Gastrocnemius medialis (tissue), 4 donors: ENCODE measurements at regions of chr11 and their contacts with region 1.

Region 1: DNA sequence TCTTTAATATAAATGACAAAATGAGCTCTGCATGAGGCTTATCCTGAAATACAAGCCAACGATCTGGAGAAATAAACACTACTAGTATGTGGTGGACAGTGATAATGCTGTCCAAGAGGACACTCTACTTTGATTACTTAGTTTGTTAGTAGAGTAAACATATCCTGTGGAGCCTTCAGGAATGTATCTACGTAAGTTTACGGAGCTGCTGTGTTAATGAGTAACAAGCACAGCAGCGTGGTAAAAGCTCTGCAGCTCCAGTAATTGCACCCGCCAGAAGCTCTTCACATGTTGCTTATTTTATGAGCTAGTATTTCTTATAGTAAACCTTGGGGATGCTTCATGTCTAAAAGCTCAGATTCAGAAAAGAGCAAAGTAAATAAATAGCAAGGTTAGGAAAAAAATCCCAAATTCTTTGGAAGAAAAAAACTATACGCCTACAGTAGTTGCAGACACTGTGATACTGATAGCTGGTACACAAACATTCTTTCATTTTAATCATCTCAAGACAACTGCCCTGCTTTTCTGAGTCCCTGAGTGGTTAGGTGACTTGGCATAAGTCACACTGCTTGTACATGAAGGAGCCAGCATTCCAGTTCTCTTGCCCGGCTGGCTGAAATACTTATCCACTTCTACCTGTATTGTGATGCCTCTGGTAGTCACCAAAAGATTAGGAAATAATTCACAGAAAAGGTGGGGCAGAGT is 32.7 kb upstream of the CCDC34 start:
- DNase-seq: no peak
- ATAC-seq: peak in 1 of 2 donors; percentile 65
- H3K4me3 ChIP-seq: no peak overlapping the region
- H3K27ac ChIP-seq: no peak overlapping the region
- H3K4me1 ChIP-seq: peaks cover 23 to 33% of the 10 kb centered on the region in 2 donors
- H3K27me3 ChIP-seq: no peaks in the 10 kb centered on the region
- CTCF ChIP-seq: no peak
- POLR2A ChIP-seq: no peak

Region 2: DNA sequence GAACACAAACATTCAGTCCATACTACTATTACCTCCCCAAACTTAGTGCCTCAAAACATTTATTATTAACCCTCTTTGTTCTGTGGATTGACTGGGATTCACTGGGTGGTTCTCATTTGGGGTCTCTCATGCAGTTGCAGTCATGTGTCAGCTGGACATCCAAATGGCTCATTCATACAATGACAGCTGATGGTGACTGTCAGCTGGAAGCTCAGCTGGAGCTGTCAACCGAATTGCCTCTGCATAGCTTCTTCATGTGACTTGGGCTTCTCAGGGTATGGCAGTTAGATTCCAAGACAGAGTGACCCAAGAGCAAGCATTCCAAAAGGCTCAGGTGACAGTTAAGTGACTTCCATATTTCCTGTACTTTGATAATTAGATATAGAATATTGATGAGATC is 117.9 kb before region 1 on chr11:
- in situ Hi-C with region 1: no loop called
- intact Hi-C with region 1: no loop called
- DNase-seq: no peak
- ATAC-seq: no peak
- H3K4me3 ChIP-seq: no peak overlapping the region
- H3K27ac ChIP-seq: no peak overlapping the region
- H3K4me1 ChIP-seq: peaks cover 0 to 8% of the 10 kb centered on the region in 2 donors
- H3K27me3 ChIP-seq: no peaks in the 10 kb centered on the region
- CTCF ChIP-seq: no peak
- POLR2A ChIP-seq: no peak

Region 3: DNA sequence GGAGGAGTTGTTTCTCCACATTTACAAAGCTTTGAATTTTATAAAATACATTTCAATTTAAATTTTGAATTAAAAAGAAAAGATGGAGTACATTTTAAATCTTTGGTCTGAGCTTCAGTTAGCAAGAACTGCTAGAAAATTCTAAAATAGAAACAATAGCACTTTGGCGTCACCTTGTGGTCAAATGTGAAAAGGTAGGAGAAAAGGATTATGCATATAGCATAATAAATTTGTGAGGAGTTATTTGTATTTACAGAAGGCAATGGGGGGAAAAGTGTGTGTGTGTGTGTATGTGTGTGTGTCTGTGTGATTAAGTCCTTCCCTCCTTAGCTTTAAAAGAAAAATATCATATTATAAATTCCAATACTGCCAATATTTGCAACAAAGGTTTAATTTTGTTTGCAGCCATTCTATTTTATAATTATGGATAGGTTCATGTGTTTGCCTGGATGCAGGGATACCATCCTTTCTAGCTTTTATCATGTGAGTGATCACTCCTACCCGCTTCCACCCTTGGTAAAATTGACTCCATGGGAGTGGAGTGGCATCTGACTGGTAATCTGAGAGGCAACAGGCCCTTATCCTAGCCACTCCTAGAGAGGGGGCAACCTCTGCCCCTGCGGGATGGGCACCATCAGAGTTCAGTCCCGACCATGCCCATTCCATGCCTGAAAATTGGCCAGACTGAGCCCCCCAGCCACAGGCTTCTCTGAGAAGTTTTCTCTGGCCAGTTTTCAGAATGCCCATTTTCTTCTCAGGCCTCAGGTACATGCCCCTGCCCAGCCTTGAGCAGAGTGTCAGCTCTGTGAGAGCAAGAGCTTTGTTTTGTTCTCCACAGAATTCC is 90.4 kb after region 1 on chr11:
- in situ Hi-C with region 1: no loop called
- intact Hi-C with region 1: loop called (anchors 5 kb)
- DNase-seq: no peak
- ATAC-seq: peak in 1 of 2 donors; percentile 47
- H3K4me3 ChIP-seq: no peak overlapping the region
- H3K27ac ChIP-seq: no peak overlapping the region
- H3K4me1 ChIP-seq: no peaks in the 10 kb centered on the region
- H3K27me3 ChIP-seq: no peaks in the 10 kb centered on the region
- CTCF ChIP-seq: peak; percentile 77 to 96 (median 89)
- POLR2A ChIP-seq: no peak